AG04449 (cell line): ENCODE measurements at regions of chr5 and their contacts with region 1.

Region 1: GRCh38 chr5:132227485-132228240 is at the start of gene P4HA2:
- DNase-seq: no peak
- H3K4me3 ChIP-seq: peak within 1 kb of the TSS; percentile 70
- CTCF ChIP-seq: no peak

Region 2: GRCh38 chr5:132215329-132215728 is 12.3 kb before region 1 on chr5:
- CTCF ChIA-PET with region 1: interaction called, 11 read pairs
- POLR2A ChIA-PET with region 1: interaction called, 16 read pairs
- DNase-seq: peak; percentile 80
- H3K4me3 ChIP-seq: no peak overlapping the region
- CTCF ChIP-seq: no peak